ENCODE measurements at regions of chr19 and their contacts with region 1.

Region 1: GRCh38 chr19:8208922-8209461 is at the start of gene CERS4:
- DNase-seq: peak; percentile 82
- ATAC-seq: peak; percentile 80
- H3K4me3 ChIP-seq: peak within 1 kb of the TSS; percentile 92 to 94 (median 93)
- H3K27ac ChIP-seq: peak within 1 kb of the TSS; percentile 79
- H3K4me1 ChIP-seq: peaks cover 80% of the 10 kb centered on the region
- H3K27me3 ChIP-seq: peaks cover 0 to 4% of the 10 kb centered on the region in 2 experiments; a peak in 1 of 5 replicates
- CTCF ChIP-seq: no peak
- EP300 ChIP-seq: peak in 1 of 2 experiments; percentile 56; a peak in 1 of 4 replicates
- POLR2A ChIP-seq: peak in 1 of 2 experiments; percentile 90; a peak in 2 of 4 replicates
- RAD21 ChIP-seq: no peak
- total RNA-seq, gene CERS4: 47.4 and 83.5 TPM in 2 replicates

Region 2: GRCh38 chr19:8240274-8241229 is 31.6 kb after region 1 on chr19:
- CTCF ChIA-PET with region 1: no interaction called
- POLR2A ChIA-PET with region 1: interaction called, 5 read pairs
- in situ Hi-C with region 1: no loop called
- intact Hi-C with region 1: loop called (anchors 2 kb)
- DNase-seq: peak; percentile 90
- ATAC-seq: peak; percentile 90
- H3K4me3 ChIP-seq: peak overlapping the region in 1 of 3 experiments; percentile 18; a peak in 1 of 6 replicates
- H3K27ac ChIP-seq: peak overlapping the region; percentile 69
- H3K4me1 ChIP-seq: peaks cover 83% of the 10 kb centered on the region
- H3K27me3 ChIP-seq: no peaks in the 10 kb centered on the region
- CTCF ChIP-seq: no peak
- EP300 ChIP-seq: peak in 1 of 2 experiments; percentile 70; a peak in 2 of 4 replicates
- POLR2A ChIP-seq: 0 out of 4 replicates have a peak, but pooled peaks of 1 of the 2 experiments have one; percentile 38
- RAD21 ChIP-seq: no peak

Measured in HepG2 (cell line).